Caco-2 (cell line): ENCODE measurements at regions of chr4 and their contacts with region 1.

Region 1: DNA sequence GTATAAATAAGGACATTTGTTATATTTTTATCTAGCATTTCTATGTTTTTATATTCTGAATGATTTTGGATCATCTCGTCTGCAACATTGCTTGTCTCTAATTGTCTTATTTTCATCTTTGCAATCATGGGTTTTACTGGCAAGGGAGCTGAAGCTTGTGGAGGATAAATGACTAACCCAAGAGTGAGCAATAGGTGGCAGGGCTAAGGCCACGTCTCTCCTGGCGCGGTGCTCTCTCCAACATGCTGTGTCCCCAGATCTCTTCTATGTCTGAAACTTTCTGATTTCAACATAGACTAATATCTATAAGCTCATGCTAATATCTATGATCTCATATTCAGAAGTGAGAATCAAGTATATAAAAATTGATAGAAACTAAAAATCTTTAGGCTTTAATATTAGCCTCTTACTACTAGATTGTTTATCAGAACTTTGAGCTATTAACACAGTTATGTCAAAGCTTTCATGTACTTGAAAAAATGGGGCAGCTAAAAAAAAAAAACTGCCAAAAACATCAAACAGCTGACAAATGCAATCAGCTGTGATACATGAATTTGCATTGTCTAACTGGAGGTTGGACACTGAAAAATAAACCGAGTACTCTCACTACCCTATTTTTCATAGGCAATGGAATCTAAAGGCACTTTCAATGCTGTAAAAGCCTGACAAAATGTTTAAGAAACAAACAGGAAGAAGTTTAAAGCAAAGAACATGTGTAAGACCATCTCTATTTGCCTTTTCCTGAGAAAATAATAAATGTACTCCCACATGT is 169.2 kb downstream of the TMA16 start:
- DNase-seq: no peak
- H3K4me3 ChIP-seq: no peak overlapping the region
- H3K4me3 Mint-ChIP-seq: no peak overlapping the region
- H3K27ac Mint-ChIP-seq: no peak overlapping the region
- H3K4me1 ChIP-seq: no peaks in the 10 kb centered on the region
- H3K4me1 Mint-ChIP-seq: no peaks in the 10 kb centered on the region
- H3K27me3 ChIP-seq: no peaks in the 10 kb centered on the region
- H3K27me3 Mint-ChIP-seq: peaks cover 4% of the 10 kb centered on the region
- CTCF ChIP-seq: no peak

Region 2: GRCh38 chr4:163622379-163623035 is 41.1 kb before region 1 on chr4:
- CTCF ChIA-PET with region 1: no interaction called
- POLR2A ChIA-PET with region 1: no interaction called
- intact Hi-C with region 1: loop called (anchors 5 kb)
- DNase-seq: no peak
- H3K4me3 ChIP-seq: no peak overlapping the region
- H3K4me3 Mint-ChIP-seq: no peak overlapping the region
- H3K27ac Mint-ChIP-seq: no peak overlapping the region
- H3K4me1 ChIP-seq: no peaks in the 10 kb centered on the region
- H3K4me1 Mint-ChIP-seq: no peaks in the 10 kb centered on the region
- H3K27me3 ChIP-seq: no peaks in the 10 kb centered on the region
- H3K27me3 Mint-ChIP-seq: peaks cover 8% of the 10 kb centered on the region
- CTCF ChIP-seq: no peak